Thyroid gland (tissue), 4 donors: ENCODE measurements at regions of chr13 and their contacts with region 1.

Region 1: DNA sequence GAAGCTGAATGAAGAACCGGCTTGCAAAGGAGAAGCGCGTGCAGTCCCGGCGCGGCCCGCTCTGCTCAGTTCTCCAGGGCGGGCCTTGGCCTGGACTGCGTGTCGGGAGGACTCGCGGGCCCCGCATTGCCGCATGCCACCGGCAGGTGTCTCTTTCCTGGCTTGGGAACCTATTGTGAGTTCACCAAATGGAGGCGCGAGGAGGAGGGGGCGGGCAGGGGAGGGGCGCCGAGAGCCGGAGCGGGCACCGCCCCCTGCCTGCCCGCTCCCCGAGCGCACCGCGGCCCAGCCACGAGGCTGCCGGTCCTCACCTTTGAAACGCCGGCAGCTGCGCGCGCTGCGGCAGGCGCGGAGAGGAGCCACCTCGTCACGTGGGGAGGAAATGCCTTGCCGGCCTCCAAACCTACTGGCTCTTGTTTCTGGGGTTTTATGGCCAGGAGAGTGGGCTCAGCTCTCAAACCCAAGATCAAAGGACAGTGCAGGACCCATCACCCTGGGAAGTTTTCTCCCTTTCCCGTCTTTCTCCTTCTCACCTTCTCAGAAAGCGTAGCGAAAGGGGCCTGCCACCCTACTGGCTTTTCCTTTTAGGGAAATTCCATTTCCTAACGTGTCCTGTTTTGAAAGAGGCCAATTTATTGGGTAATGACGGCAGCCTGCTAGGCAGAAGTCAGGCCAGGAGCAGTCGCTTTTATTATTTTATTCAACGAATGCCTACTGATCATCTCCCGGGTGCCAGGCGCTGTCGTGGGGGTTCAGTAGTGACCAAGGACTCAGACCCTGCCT is 13.8 kb upstream of the UBE2L5 start:
- DNase-seq: peak; percentile 95 to 96
- H3K4me3 ChIP-seq: peak overlapping the region in 1 of 3 donors; percentile 13
- H3K27ac ChIP-seq: peak overlapping the region; percentile 57 to 69 (median 61)
- H3K4me1 ChIP-seq: peaks cover 3 to 20% of the 10 kb centered on the region in 2 donors
- H3K27me3 ChIP-seq: no peaks in the 10 kb centered on the region
- CTCF ChIP-seq: peak; percentile 49 to 97 (median 78)
- POLR2A ChIP-seq: peak in 1 of 2 donors; percentile 31

Region 2: DNA sequence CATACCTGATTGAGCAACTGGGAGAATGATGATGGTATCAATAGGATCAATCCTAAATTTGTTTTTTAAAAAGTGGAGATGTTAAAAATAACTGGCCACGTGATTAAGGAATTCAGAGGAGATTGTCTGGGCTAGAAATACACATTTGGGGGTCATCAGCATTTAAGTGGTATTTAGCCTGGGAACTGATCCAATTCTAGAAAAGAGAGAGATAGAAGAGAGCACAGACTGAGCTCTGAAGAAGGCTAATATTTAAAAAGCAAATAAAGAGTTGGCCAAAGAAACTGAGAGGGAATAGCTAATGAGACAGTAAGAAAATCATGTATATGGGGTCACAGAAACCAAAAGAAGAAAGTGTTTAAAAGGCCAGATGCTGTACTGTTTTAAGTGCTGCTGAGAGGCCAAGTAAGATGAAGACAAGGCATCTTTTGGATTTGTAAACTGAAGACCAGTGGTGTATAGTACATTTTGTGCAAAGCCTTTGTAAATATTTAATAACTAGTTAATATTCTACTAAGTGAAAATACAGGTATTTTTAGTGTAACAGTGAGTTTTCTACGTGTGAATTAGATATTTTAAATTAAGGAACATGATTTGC is 598.3 kb before region 1 on chr13:
- intact Hi-C with region 1: no loop called
- DNase-seq: no peak
- H3K4me3 ChIP-seq: no peak overlapping the region
- H3K27ac ChIP-seq: no peak overlapping the region
- H3K4me1 ChIP-seq: peaks cover 19 to 46% of the 10 kb centered on the region in 2 donors
- H3K27me3 ChIP-seq: no peaks in the 10 kb centered on the region
- CTCF ChIP-seq: no peak
- POLR2A ChIP-seq: no peak

Region 3: DNA sequence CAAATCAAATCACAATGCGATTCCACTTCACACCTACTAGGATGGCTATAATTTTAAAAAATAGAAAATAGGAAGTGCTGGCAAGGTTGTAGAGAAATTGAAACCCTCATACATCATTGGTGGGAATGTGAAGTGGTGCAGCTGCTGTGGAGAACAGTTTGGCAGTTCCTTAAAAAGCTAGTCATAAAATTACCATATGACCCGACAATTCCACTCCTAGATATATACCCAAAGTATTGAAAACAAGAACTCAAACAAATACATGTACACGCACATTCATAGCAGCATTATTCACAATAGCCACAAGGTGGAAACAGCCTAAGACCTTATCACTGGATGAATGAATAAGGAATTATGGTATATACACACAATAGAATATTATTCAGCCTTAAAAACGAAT is 45.2 kb after region 1 on chr13:
- intact Hi-C with region 1: loop called (anchors 10 kb)
- DNase-seq: no peak
- H3K4me3 ChIP-seq: no peak overlapping the region
- H3K27ac ChIP-seq: no peak overlapping the region
- H3K4me1 ChIP-seq: no peaks in the 10 kb centered on the region
- H3K27me3 ChIP-seq: no peaks in the 10 kb centered on the region
- CTCF ChIP-seq: no peak
- POLR2A ChIP-seq: no peak